IMR-90 (cell line): ENCODE measurements at regions of chr1 and their contacts with region 1.

Region 1: GRCh38 chr1:39816415-39817090 is 27.9 kb upstream of the BMP8B start:
- DNase-seq: peak; percentile 91
- ATAC-seq: peak; percentile 95
- H3K4me3 ChIP-seq: no peak overlapping the region
- H3K27ac ChIP-seq: no peak overlapping the region
- H3K4me1 ChIP-seq: no peaks in the 10 kb centered on the region
- H3K27me3 ChIP-seq: peaks cover 8% of the 10 kb centered on the region
- CTCF ChIP-seq: peak; percentile 84
- POLR2A ChIP-seq: 0 out of 2 replicates have a peak, but pooled peaks have one; percentile 25
- RAD21 ChIP-seq: peak; percentile 85

Region 2: DNA sequence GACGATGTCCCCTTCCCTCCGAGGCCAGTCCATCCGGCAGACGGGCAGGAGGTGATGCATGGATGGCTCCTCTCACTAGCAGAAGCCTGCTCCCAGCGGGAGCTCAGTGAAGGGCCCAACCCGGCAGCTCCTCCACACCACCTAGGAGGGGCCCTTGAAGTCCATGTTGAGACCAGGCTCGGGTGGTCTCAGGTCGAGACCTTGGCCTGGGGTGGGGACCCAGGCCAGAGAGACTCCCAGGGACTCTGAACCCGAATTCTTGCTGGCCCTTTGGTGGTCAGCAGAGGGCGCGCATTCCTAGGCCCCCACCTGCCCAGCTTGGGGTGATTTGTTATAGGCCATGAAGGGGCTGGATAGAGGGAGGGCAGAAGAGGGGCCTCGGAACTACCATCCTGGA is 144.0 kb before region 1 on chr1:
- CTCF ChIA-PET with region 1: no interaction called
- POLR2A ChIA-PET with region 1: no interaction called
- dilution Hi-C with region 1: no loop called
- in situ Hi-C with region 1: no loop called
- intact Hi-C with region 1: no loop called
- DNase-seq: no peak
- ATAC-seq: peak; percentile 68
- H3K4me3 ChIP-seq: no peak overlapping the region
- H3K27ac ChIP-seq: no peak overlapping the region
- H3K4me1 ChIP-seq: no peaks in the 10 kb centered on the region; the same call in 1 of the 2 replicates
- H3K27me3 ChIP-seq: peaks cover 76% of the 10 kb centered on the region
- CTCF ChIP-seq: peak; percentile 38; the same call in 1 of the 2 replicates
- POLR2A ChIP-seq: no peak
- RAD21 ChIP-seq: no peak

Region 3: DNA sequence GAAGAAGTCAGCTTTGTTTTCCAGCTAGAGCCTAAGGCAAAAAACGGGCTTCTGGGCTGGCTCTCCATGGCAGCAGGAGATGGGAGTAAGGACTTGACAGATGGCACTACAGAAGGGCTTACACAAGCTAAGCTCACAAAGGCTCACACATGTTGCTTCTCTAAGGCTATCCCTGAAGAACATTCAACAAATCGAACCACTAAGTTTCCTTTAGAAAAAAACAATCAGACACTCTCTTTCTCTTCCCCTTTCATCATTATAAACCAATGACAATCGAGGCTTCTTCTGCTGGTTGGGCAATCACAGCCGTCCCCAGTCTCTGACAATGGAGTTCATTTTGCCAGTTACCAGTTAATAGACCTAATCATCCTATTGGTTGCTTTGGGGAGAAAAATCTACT is 26.3 kb after region 1 on chr1:
- CTCF ChIA-PET with region 1: no interaction called
- POLR2A ChIA-PET with region 1: no interaction called
- dilution Hi-C with region 1: no loop called
- in situ Hi-C with region 1: no loop called
- intact Hi-C with region 1: no loop called
- DNase-seq: no peak
- ATAC-seq: no peak
- H3K4me3 ChIP-seq: no peak overlapping the region
- H3K27ac ChIP-seq: no peak overlapping the region
- H3K4me1 ChIP-seq: peaks cover 15% of the 10 kb centered on the region
- H3K27me3 ChIP-seq: no peaks in the 10 kb centered on the region
- CTCF ChIP-seq: no peak
- POLR2A ChIP-seq: no peak
- RAD21 ChIP-seq: no peak

Region 4: GRCh38 chr1:39886757-39887231 is 70.2 kb after region 1 on chr1:
- CTCF ChIA-PET with region 1: no interaction called
- POLR2A ChIA-PET with region 1: no interaction called
- dilution Hi-C with region 1: no loop called
- in situ Hi-C with region 1: no loop called
- intact Hi-C with region 1: no loop called
- DNase-seq: no peak
- ATAC-seq: no peak
- H3K4me3 ChIP-seq: no peak overlapping the region
- H3K27ac ChIP-seq: no peak overlapping the region
- H3K4me1 ChIP-seq: peaks cover 2% of the 10 kb centered on the region; the same call in 1 of the 2 replicates
- H3K27me3 ChIP-seq: no peaks in the 10 kb centered on the region
- CTCF ChIP-seq: no peak
- POLR2A ChIP-seq: no peak
- RAD21 ChIP-seq: no peak

Region 5: GRCh38 chr1:39901698-39902459 is 85.3 kb after region 1 on chr1 and contains the start of gene MYCL:
- CTCF ChIA-PET with region 1: interaction called, 4 read pairs
- POLR2A ChIA-PET with region 1: no interaction called
- dilution Hi-C with region 1: no loop called
- in situ Hi-C with region 1: no loop called
- intact Hi-C with region 1: loop called (anchors 1 kb)
- DNase-seq: peak; percentile 60
- ATAC-seq: peak; percentile 67
- H3K4me3 ChIP-seq: peak within 1 kb of the TSS; percentile 45
- H3K27ac ChIP-seq: no peak within 1 kb of the TSS
- H3K4me1 ChIP-seq: peaks cover 4% of the 10 kb centered on the region; the same call in 1 of the 2 replicates
- H3K27me3 ChIP-seq: peaks cover 22% of the 10 kb centered on the region
- CTCF ChIP-seq: peak; percentile 53
- POLR2A ChIP-seq: no peak
- RAD21 ChIP-seq: peak; percentile 54
- total RNA-seq, gene MYCL: 0.56 and 0.72 TPM in 2 replicates

Region 6: DNA sequence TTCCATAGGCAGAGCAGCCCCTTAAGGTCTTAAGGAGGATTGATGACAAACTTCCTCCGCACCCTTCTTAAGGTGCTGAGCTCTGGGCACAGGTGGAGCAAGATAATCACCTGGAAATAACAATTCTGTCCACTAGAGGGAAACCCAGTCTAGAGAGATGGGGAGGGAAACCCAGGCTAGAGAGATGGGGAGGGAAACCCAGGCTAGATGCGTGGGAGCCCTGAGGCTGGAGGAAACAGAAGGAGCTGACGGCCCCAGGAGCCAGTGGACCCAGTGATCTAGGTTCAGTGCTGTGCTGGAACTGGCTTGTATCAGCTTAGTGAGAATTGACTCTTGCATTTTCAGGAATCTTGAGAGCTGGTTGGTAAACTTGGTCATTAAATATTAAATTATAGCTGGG is 103.0 kb after region 1 on chr1:
- CTCF ChIA-PET with region 1: no interaction called
- POLR2A ChIA-PET with region 1: no interaction called
- dilution Hi-C with region 1: no loop called
- in situ Hi-C with region 1: no loop called
- intact Hi-C with region 1: loop called (anchors 2 kb)
- DNase-seq: peak; percentile 58
- ATAC-seq: peak; percentile 89
- H3K4me3 ChIP-seq: no peak overlapping the region
- H3K27ac ChIP-seq: no peak overlapping the region
- H3K4me1 ChIP-seq: no peaks in the 10 kb centered on the region
- H3K27me3 ChIP-seq: peaks cover 15% of the 10 kb centered on the region
- CTCF ChIP-seq: peak; percentile 76
- POLR2A ChIP-seq: no peak
- RAD21 ChIP-seq: peak; percentile 78

Region 7: GRCh38 chr1:40032240-40032891 is 215.8 kb after region 1 on chr1:
- CTCF ChIA-PET with region 1: interaction called, 4 read pairs
- POLR2A ChIA-PET with region 1: no interaction called
- dilution Hi-C with region 1: no loop called
- in situ Hi-C with region 1: loop called (anchors 10 kb)
- intact Hi-C with region 1: loop called (anchors 1 kb)
- DNase-seq: peak; percentile 76
- ATAC-seq: peak; percentile 80
- H3K4me3 ChIP-seq: no peak overlapping the region
- H3K27ac ChIP-seq: no peak overlapping the region
- H3K4me1 ChIP-seq: peaks cover 5% of the 10 kb centered on the region
- H3K27me3 ChIP-seq: no peaks in the 10 kb centered on the region
- CTCF ChIP-seq: peak; percentile 74
- POLR2A ChIP-seq: no peak
- RAD21 ChIP-seq: peak; percentile 70

Region 8: GRCh38 chr1:40039757-40040510 is 223.4 kb after region 1 on chr1:
- CTCF ChIA-PET with region 1: no interaction called
- POLR2A ChIA-PET with region 1: no interaction called
- dilution Hi-C with region 1: no loop called
- in situ Hi-C with region 1: loop called (anchors 10 kb)
- intact Hi-C with region 1: no loop called
- DNase-seq: peak; percentile 79
- ATAC-seq: peak; percentile 71
- H3K4me3 ChIP-seq: peak overlapping the region; percentile 63
- H3K27ac ChIP-seq: peak overlapping the region; percentile 96
- H3K4me1 ChIP-seq: peaks cover 7% of the 10 kb centered on the region
- H3K27me3 ChIP-seq: no peaks in the 10 kb centered on the region
- CTCF ChIP-seq: no peak
- POLR2A ChIP-seq: peak; percentile 94
- RAD21 ChIP-seq: no peak

Region 9: GRCh38 chr1:40161125-40161887 is 344.8 kb after region 1 on chr1 and contains the start of gene RLF:
- CTCF ChIA-PET with region 1: no interaction called
- POLR2A ChIA-PET with region 1: no interaction called
- dilution Hi-C with region 1: no loop called
- in situ Hi-C with region 1: no loop called
- intact Hi-C with region 1: no loop called
- DNase-seq: peak; percentile 93
- ATAC-seq: peak; percentile 97
- H3K4me3 ChIP-seq: peak within 1 kb of the TSS; percentile 79
- H3K27ac ChIP-seq: peak within 1 kb of the TSS; percentile 90
- H3K4me1 ChIP-seq: peaks cover 3% of the 10 kb centered on the region
- H3K27me3 ChIP-seq: peaks cover 3% of the 10 kb centered on the region; the same call in 1 of the 2 replicates
- CTCF ChIP-seq: no peak
- POLR2A ChIP-seq: peak; percentile 99
- RAD21 ChIP-seq: no peak
- total RNA-seq, gene RLF: 29.8 and 33.1 TPM in 2 replicates